ENCODE measurements at regions of chr19 and their contacts with region 1.

Region 1: GRCh38 chr19:58326914-58327726 is at the start of gene ZSCAN22:
- DNase-seq: peak; percentile 78 to 98
- H3K4me3 ChIP-seq: peak within 1 kb of the TSS; percentile 91 to 92
- H3K27ac ChIP-seq: peak within 1 kb of the TSS; percentile 91 to 96
- H3K4me1 ChIP-seq: peaks cover 4 to 13% of the 10 kb centered on the region in 2 donors
- H3K27me3 ChIP-seq: no peaks in the 10 kb centered on the region
- CTCF ChIP-seq: no peak
- total RNA-seq, gene ZSCAN22: 1.9 TPM

Region 2: GRCh38 chr19:57964748-57965147 is 362.4 kb before region 1 on chr19:
- intact Hi-C with region 1: no loop called
- DNase-seq: no peak
- H3K4me3 ChIP-seq: no peak overlapping the region
- H3K27ac ChIP-seq: no peak overlapping the region
- H3K4me1 ChIP-seq: no peaks in the 10 kb centered on the region
- H3K27me3 ChIP-seq: no peaks in the 10 kb centered on the region
- CTCF ChIP-seq: no peak

Region 3: DNA sequence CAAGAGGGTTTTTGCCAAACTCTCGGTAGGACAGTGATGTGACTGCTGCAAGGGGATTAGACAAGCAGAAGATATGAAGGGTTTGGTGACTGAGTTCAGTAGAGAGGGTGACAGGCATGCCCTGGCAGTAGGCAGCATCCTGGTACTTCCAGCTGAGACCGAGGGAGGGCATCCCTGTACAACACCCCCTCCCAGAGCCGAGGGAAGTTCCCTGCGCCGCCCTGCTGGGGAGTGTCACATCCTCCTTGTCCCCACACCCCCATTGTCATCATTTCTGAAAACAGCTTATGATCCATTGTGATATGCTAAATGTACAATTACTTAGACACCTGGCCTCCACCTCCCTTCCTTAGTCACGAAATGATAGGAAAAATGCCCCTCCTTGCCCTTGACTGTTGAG is 83.8 kb before region 1 on chr19:
- intact Hi-C with region 1: no loop called
- DNase-seq: no peak
- H3K4me3 ChIP-seq: no peak overlapping the region
- H3K27ac ChIP-seq: no peak overlapping the region
- H3K4me1 ChIP-seq: no peaks in the 10 kb centered on the region
- H3K27me3 ChIP-seq: no peaks in the 10 kb centered on the region
- CTCF ChIP-seq: no peak

Region 4: DNA sequence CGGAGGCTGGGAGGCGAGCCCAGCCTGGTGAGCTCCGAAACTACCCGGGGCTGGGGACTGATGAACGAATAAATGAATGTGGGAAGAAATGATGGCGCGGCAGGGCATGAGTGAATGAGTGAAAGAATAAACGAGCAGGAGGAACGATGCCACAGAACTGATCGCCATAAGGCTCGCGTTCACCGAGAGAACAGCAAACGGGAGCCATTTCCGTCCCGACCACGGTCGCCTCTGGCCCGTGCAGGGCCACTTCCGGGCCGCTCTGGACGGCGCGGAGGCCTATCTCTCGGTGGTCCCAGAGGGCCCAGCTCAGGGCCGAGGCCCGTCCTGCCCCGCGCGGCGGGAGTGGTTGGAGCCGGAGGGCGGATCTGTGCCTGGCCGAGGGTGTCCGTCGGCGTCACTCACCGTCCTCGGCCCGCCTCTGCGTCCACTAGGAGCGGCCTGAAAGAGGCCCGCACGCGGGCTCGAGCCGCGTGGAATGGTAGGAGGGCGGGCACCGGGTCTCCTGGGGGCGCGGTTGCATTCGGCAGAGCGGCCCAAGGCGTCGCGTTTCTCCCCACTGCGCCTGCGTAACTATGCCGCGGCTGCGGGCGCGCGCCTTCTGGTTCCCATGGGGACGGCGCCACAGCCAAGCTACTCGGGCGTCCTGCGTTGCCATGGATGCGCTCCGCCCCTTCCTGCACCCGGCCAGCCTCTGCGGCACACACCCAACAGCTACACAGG is 35.3 kb after region 1 on chr19 and contains the start of gene ZNF497:
- intact Hi-C with region 1: loop called (anchors 1 kb)
- DNase-seq: peak; percentile 78 to 97
- H3K4me3 ChIP-seq: peak within 1 kb of the TSS; percentile 67 to 74
- H3K27ac ChIP-seq: peak within 1 kb of the TSS; percentile 86 to 94
- H3K4me1 ChIP-seq: peaks cover 0 to 7% of the 10 kb centered on the region in 2 donors
- H3K27me3 ChIP-seq: no peaks in the 10 kb centered on the region
- CTCF ChIP-seq: no peak
- total RNA-seq, gene ZNF497: not detected

Region 5: GRCh38 chr19:58400916-58401839 is 74.1 kb after region 1 on chr19:
- intact Hi-C with region 1: no loop called
- DNase-seq: peak; percentile 99
- H3K4me3 ChIP-seq: peak overlapping the region; percentile 66 to 67
- H3K27ac ChIP-seq: no peak overlapping the region
- H3K4me1 ChIP-seq: peaks cover 7 to 10% of the 10 kb centered on the region in 2 donors
- H3K27me3 ChIP-seq: no peaks in the 10 kb centered on the region
- CTCF ChIP-seq: peak in 1 of 3 experiments; percentile 30

Region 6: DNA sequence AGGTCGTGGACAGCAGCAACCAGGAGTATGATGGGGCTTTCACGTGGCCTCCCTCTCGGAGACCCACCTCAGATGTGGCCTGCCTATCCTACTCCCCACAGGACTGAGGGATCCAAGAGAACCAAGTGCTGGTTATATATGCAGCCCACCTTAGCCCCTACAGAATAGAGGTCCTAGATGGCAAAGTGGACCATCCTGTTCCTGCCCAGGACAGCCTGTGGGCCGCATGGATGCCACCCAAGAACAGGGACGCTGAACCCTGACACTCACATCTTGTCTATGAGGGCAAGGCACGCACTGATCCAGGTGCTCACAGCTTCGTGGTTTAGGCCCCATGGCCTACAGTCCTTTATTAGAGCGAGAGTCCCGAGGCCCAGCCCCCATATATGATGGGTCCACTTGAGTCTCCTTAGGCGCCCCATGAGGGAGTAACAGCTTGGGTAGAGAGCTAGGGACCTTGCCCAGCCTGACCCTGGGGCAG is 186.1 kb after region 1 on chr19:
- intact Hi-C with region 1: no loop called
- DNase-seq: no peak
- H3K4me3 ChIP-seq: no peak overlapping the region
- H3K27ac ChIP-seq: peak overlapping the region in 1 of 2 donors; percentile 27
- H3K4me1 ChIP-seq: peaks cover 9 to 26% of the 10 kb centered on the region in 2 donors
- H3K27me3 ChIP-seq: no peaks in the 10 kb centered on the region
- CTCF ChIP-seq: no peak